ENCODE measurements at regions of chr1 and their contacts with region 1.

Region 1: GRCh38 chr1:26417111-26417759 is 6.6 kb downstream of the LIN28A start:
- DNase-seq: peak; percentile 64
- ATAC-seq: peak; percentile 97
- H3K4me3 ChIP-seq: no peak overlapping the region
- H3K27ac ChIP-seq: no peak overlapping the region
- H3K4me1 ChIP-seq: no peaks in the 10 kb centered on the region
- H3K27me3 ChIP-seq: peaks cover 64% of the 10 kb centered on the region
- CTCF ChIP-seq: peak; percentile 78
- POLR2A ChIP-seq: no peak
- RAD21 ChIP-seq: peak; percentile 71

Region 2: DNA sequence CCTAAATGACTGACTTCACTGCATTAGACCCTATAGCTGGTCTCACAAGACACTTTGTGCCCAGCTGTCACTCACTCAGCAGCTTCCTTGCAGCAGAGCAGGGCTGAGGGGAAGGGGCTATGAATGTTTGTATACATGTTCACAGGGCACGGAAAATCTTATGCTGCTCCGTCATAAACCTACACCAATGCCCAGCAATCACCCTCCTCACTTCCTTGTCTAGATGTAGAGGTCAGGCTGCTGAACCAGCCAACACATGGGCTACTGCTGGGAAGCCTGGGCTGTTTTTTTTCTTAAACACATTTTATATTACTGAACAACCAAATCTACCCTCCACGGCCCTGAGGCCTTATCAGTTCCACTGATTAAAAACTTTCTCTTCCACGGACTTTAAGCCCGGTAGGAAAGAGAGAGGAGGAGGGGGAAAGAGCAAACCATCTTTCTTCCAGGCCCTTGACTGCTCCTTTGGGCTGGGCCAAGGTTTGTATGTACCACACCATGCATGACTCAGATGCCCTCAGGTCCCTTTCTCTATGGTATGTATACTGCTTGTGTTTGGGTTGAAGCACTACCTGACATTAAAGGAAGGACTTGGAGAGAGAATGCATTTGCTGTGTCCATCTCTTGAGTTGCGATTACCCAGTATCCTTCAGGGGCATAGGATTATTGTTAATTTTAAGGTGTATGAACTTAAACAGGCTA is 584.7 kb before region 1 on chr1:
- CTCF ChIA-PET with region 1: no interaction called
- POLR2A ChIA-PET with region 1: no interaction called
- dilution Hi-C with region 1: no loop called
- in situ Hi-C with region 1: no loop called
- intact Hi-C with region 1: no loop called
- DNase-seq: no peak
- ATAC-seq: no peak
- H3K4me3 ChIP-seq: no peak overlapping the region
- H3K27ac ChIP-seq: no peak overlapping the region
- H3K4me1 ChIP-seq: no peaks in the 10 kb centered on the region
- H3K27me3 ChIP-seq: no peaks in the 10 kb centered on the region
- CTCF ChIP-seq: no peak
- POLR2A ChIP-seq: no peak
- RAD21 ChIP-seq: no peak

Region 3: GRCh38 chr1:26279456-26280332 is 137.5 kb before region 1 on chr1 and contains the start of gene SH3BGRL3:
- CTCF ChIA-PET with region 1: no interaction called
- POLR2A ChIA-PET with region 1: no interaction called
- dilution Hi-C with region 1: no loop called
- in situ Hi-C with region 1: no loop called
- intact Hi-C with region 1: loop called (anchors 2 kb)
- DNase-seq: peak; percentile 75
- ATAC-seq: peak; percentile 68
- H3K4me3 ChIP-seq: peak within 1 kb of the TSS; percentile 89
- H3K27ac ChIP-seq: peak within 1 kb of the TSS; percentile 95
- H3K4me1 ChIP-seq: peaks cover 64% of the 10 kb centered on the region
- H3K27me3 ChIP-seq: no peaks in the 10 kb centered on the region
- CTCF ChIP-seq: peak; percentile 46
- POLR2A ChIP-seq: peak; percentile 93
- RAD21 ChIP-seq: no peak; the same call in 1 of the 2 replicates
- total RNA-seq, gene SH3BGRL3: 32.2 and 35.0 TPM in 2 replicates

Region 4: DNA sequence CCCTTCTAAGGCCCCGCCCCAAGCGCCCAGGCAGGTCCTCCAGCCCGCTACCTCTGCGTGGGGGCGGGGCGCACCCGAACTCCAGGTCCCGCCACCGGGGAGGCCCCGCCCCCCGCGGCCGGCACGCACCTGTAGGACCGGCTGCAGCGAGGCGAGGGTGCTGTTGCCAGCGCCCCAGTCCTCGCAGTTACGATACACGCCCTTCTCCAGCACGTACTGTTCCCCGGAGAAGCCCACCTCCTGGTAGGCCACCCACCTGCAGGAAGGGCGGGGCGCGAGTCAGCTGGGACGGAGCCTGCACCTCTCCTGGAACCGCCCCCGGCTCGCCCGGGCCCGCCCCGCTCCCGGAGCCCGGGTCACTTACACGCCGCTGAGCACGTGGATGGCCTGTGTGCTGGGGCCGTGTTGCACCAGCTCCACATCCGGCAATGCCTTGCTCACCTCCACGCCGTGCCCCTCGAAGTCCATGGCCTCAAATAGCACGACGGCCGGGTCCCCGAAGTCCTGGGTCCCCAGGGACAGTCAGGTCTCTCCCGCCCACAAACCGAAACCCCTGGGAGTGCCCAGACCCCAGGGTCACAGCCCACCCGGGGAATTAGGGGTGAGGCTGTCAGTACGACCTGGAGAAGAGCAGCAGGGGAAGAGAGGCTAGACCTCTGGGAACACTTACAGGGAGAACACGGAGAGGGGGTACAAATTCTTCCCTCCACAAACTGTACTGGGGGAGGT is 80.6 kb before region 1 on chr1:
- CTCF ChIA-PET with region 1: no interaction called
- POLR2A ChIA-PET with region 1: no interaction called
- dilution Hi-C with region 1: no loop called
- in situ Hi-C with region 1: no loop called
- intact Hi-C with region 1: no loop called
- DNase-seq: no peak
- ATAC-seq: peak; percentile 64
- H3K4me3 ChIP-seq: peak overlapping the region; percentile 72
- H3K27ac ChIP-seq: no peak overlapping the region
- H3K4me1 ChIP-seq: peaks cover 4% of the 10 kb centered on the region; the same call in 1 of the 2 replicates
- H3K27me3 ChIP-seq: peaks cover 42% of the 10 kb centered on the region
- CTCF ChIP-seq: no peak
- POLR2A ChIP-seq: no peak
- RAD21 ChIP-seq: no peak

Region 5: GRCh38 chr1:26405281-26405915 is 11.8 kb before region 1 on chr1:
- CTCF ChIA-PET with region 1: interaction called, 20 read pairs
- POLR2A ChIA-PET with region 1: no interaction called
- dilution Hi-C with region 1: no loop called
- in situ Hi-C with region 1: no loop called
- intact Hi-C with region 1: no loop called
- DNase-seq: peak; percentile 70
- ATAC-seq: peak; percentile 63
- H3K4me3 ChIP-seq: no peak overlapping the region
- H3K27ac ChIP-seq: no peak overlapping the region
- H3K4me1 ChIP-seq: no peaks in the 10 kb centered on the region; the same call in 1 of the 2 replicates
- H3K27me3 ChIP-seq: peaks cover 15% of the 10 kb centered on the region
- CTCF ChIP-seq: no peak
- POLR2A ChIP-seq: no peak
- RAD21 ChIP-seq: no peak